Motor neuron (in vitro differentiated cells): ENCODE measurements at regions of chr7 and their contacts with region 1.

Region 1: GRCh38 chr7:79176859-79177477 is 276.5 kb downstream of the MAGI2 start:
- ATAC-seq: peak in 5 of 8 experiments; percentile 28 to 63 (median 56)
- H3K4me3 ChIP-seq: no peak overlapping the region
- H3K27ac ChIP-seq: no peak overlapping the region
- H3K4me1 ChIP-seq: no peaks in the 10 kb centered on the region

Region 2: DNA sequence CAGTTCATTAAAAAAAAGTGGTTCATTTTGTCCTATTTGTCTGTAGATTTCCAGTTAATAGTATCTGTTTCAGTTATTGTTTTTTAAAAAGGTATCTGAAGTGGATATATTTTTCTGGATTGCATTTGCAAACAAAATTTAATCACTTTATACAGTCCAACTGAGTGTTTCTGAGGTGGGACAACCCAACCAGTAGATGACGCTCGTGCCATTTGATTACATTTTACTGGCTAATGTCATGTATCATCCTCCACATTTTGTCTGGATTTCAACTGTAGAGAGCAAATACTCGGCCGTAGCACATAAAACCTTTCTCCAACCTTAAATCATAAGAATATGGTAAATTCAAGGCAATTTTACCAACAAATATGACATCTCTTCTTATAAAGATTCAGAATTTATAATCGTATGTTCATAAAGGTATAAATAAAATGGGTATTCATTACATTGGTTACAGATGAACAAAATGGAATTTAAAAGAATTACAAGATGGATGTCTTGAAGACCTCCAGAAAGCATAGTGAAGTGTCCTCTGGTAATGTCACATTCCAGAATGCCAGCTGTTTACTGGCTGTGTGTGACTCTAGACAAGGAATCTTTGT is 589.4 kb before region 1 on chr7:
- in situ Hi-C with region 1: loop called in 1 of 9 experiments (anchors 25 kb)
- ATAC-seq: peak in 3 of 8 experiments; percentile 56 to 74 (median 71)
- H3K4me3 ChIP-seq: no peak overlapping the region
- H3K27ac ChIP-seq: no peak overlapping the region
- H3K4me1 ChIP-seq: no peaks in the 10 kb centered on the region

Region 3: DNA sequence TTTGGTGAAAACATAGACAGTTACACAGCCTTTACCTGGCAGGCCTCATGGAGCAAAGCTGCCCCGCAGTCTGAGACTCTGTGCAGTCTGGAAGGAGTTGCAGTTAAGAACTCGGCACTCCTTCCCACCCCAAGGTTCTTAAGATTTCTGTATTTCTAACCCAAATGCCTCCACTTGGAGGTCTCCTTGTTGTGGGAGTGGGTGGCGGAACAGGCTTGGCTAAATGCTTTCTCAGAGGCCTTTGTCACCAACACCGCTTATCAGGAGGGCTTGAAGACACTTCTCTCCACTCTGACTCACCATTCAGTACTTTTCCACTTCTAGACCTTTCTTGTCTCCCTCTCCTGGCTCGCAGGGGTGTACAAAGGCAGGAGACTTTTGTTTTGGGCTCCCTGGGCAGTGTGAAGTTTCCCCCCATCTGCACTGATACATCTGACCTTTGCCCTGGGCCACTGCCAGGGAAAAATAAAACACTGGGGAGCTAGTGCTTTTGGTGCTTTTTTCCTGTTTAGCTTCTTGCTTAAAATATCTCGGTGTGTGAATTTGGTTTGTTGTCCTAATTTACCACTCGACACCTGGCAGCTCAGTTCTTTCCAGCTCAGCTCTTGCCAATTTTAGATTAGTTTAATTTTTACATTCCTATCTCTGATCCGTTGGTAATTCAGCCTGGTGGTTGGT is 327.9 kb after region 1 on chr7:
- in situ Hi-C with region 1: no loop called
- ATAC-seq: no peak
- H3K4me3 ChIP-seq: no peak overlapping the region
- H3K27ac ChIP-seq: no peak overlapping the region
- H3K4me1 ChIP-seq: peaks cover 0 to 14% of the 10 kb centered on the region in 2 donors